Activated naive CD4-positive, alpha-beta T cell treated with anti-CD3 and anti-CD28 coated beads for 36 hours (primary cell): ENCODE measurements at regions of chr2 and their contacts with region 1.

Region 1: GRCh38 chr2:173151671-173152398 is 76.2 kb downstream of the MAP3K20 start:
- DNase-seq: no peak
- H3K4me3 Mint-ChIP-seq: no peak overlapping the region
- H3K27ac Mint-ChIP-seq: no peak overlapping the region
- H3K4me1 Mint-ChIP-seq: peaks cover 21% of the 10 kb centered on the region
- H3K27me3 Mint-ChIP-seq: peaks cover 16% of the 10 kb centered on the region

Region 2: DNA sequence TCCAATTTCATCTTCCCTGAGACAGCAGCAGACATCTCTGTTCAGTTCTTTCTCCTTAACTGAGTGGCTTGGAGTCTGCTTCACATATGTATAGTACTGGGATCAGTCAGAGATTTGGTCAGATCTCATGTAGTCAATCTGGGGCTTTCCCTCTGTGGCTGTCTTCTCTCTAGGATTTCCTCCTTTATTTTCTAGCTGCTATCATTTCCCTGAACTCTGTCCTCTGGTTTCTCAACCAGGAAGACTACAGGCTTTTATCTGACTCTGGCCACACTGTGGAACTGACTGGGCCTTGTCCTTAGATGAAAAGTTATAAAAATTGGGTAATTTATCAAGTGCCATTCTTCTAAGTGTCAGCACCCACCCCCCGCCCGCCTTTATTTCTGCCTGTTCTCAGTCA is 295.2 kb before region 1 on chr2:
- CTCF ChIA-PET with region 1: no interaction called
- intact Hi-C with region 1: loop called (anchors 1 kb)
- DNase-seq: no peak
- H3K4me3 Mint-ChIP-seq: no peak overlapping the region
- H3K27ac Mint-ChIP-seq: no peak overlapping the region
- H3K4me1 Mint-ChIP-seq: no peaks in the 10 kb centered on the region
- H3K27me3 Mint-ChIP-seq: peaks cover 10% of the 10 kb centered on the region

Region 3: GRCh38 chr2:172962824-172963223 is 189.0 kb before region 1 on chr2:
- CTCF ChIA-PET with region 1: no interaction called
- intact Hi-C with region 1: loop called (anchors 5 kb)
- DNase-seq: peak; percentile 44
- H3K4me3 Mint-ChIP-seq: no peak overlapping the region
- H3K27ac Mint-ChIP-seq: peak overlapping the region; percentile 66
- H3K4me1 Mint-ChIP-seq: peaks cover 18% of the 10 kb centered on the region
- H3K27me3 Mint-ChIP-seq: no peaks in the 10 kb centered on the region

Region 4: DNA sequence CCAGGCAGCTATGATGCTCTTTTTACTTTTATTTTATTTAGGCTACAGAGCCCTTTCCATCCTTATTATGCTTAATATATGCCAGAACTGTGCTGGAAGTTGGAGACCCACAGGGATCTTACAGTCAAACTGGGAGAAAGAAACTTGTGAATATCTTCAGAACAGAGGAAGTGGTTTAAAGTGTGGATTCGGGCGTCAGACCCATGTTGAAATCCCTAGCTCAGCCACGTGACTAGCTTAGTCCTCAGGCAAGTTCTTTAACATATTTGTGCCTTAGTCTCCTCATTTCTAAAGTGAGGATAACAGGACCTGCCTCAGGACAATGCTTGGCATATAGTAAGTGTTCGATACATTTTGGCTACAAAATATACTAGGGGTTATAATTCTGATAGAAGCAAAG is 17.1 kb before region 1 on chr2:
- CTCF ChIA-PET with region 1: no interaction called
- intact Hi-C with region 1: loop called (anchors 1 kb)
- DNase-seq: peak; percentile 18
- H3K4me3 Mint-ChIP-seq: no peak overlapping the region
- H3K27ac Mint-ChIP-seq: no peak overlapping the region
- H3K4me1 Mint-ChIP-seq: peaks cover 46% of the 10 kb centered on the region
- H3K27me3 Mint-ChIP-seq: peaks cover 40% of the 10 kb centered on the region

Region 5: GRCh38 chr2:173264603-173265366 is 113.0 kb after region 1 on chr2:
- CTCF ChIA-PET with region 1: no interaction called
- intact Hi-C with region 1: no loop called
- DNase-seq: peak; percentile 61
- H3K4me3 Mint-ChIP-seq: peak overlapping the region; percentile 2
- H3K27ac Mint-ChIP-seq: no peak overlapping the region
- H3K4me1 Mint-ChIP-seq: peaks cover 12% of the 10 kb centered on the region
- H3K27me3 Mint-ChIP-seq: peaks cover 4% of the 10 kb centered on the region

Region 6: DNA sequence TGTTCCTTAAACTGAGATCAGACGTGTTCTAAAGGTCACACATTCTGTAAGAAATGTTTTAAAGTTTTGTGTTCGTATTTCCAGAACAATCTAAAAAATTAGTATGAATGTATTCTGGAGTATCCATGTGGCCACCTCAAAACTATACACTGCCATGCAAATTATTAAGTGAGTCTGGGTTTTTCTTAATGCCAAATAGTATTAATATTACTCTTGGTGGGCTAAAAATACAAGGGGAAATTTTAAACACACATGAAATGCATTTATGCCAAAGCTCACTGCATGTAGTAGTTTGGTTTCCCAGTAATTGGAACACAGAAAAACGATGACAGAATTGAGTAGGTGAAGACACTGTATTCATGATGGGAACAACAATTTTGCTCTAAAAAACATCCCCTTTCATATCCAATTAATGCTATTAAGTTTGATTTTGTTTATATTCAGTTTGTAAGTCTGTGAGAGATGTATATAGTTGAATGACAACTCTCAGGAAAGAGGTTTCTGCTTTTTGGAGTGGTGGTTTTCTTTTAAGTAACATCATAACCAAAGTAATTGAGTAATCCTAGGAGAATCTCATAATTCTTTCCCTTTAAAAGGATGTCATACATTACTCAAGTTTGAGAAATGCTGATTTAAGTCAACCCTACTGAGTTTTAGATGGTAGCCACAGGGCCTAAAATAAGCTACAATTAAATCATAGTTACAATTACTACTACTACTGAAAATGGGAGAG is 127.1 kb after region 1 on chr2:
- CTCF ChIA-PET with region 1: no interaction called
- intact Hi-C with region 1: loop called (anchors 1 kb)
- DNase-seq: no peak
- H3K4me3 Mint-ChIP-seq: no peak overlapping the region
- H3K27ac Mint-ChIP-seq: no peak overlapping the region
- H3K4me1 Mint-ChIP-seq: peaks cover 3% of the 10 kb centered on the region
- H3K27me3 Mint-ChIP-seq: peaks cover 5% of the 10 kb centered on the region

Region 7: DNA sequence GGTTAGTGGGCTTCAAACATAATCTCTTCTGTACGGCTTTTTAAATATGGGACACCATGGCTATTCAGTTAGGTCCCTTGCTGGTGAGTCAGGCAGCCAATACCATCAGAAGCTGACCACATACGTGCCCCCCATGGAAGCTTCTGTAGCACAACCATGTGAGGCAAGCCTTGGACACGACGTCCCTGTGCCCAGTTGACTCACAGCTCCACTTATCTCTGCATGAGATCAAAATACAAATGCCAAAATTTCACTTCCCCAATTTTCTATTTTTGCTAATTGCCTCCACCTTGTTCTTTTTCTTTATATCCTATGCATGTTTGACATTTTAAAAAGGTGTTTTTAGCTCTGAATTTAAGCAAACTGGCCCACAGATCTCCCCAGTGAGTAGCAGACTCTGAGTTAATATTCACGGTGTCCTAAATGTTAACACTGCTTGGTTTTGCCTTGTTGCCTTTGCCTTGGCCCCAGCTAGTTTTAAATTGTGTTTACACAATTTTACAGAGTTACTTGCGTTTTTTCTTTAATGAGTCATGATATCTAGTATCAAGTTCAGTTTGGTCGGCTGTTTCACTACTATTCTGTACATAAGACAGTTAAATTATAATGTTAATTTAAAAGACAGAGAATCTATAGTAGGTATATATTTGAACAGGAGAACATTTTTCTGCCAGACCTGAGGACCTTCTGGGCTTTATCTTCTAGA is 280.4 kb after region 1 on chr2:
- CTCF ChIA-PET with region 1: no interaction called
- intact Hi-C with region 1: loop called (anchors 2 kb)
- DNase-seq: no peak
- H3K4me3 Mint-ChIP-seq: no peak overlapping the region
- H3K27ac Mint-ChIP-seq: no peak overlapping the region
- H3K4me1 Mint-ChIP-seq: peaks cover 18% of the 10 kb centered on the region
- H3K27me3 Mint-ChIP-seq: peaks cover 21% of the 10 kb centered on the region